Endothelial cell of umbilical vein (primary cell): ENCODE measurements at regions of chr17 and their contacts with region 1.

Region 1: DNA sequence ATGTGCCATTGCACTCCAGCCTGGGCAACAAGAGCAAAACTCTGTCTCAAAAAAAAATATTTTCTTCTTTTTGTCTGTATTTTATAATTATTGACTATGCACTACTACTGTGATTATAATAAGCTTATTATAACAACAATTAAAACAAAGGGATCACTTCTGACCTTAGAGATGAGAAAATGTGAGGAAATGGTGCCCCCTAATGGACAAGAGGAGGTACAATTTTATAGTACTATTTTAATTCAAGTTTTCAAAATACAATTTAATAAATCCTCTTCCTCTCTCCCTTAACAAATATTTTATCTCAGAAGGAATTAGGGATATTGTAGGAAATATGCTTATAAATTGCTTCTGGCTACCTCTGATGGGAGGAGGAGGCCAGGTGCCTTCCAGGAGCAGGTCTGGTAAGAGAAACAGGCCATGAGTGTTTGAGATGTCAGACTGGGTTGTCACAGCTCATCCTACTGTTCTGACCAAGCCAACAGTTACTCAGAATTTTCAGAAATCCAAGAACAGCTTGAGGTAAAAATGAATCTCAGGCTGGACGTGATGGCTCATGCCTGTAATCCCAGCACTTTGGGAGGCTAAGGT is 14.0 kb downstream of the VPS53 start:
- DNase-seq: peak; percentile 40
- H3K4me3 ChIP-seq: no peak overlapping the region
- H3K27ac ChIP-seq: no peak overlapping the region
- H3K4me1 ChIP-seq: peaks cover 13% of the 10 kb centered on the region
- H3K27me3 ChIP-seq: no peaks in the 10 kb centered on the region
- CTCF ChIP-seq: peak; percentile 19 to 23
- POLR2A ChIP-seq: no peak

Region 2: DNA sequence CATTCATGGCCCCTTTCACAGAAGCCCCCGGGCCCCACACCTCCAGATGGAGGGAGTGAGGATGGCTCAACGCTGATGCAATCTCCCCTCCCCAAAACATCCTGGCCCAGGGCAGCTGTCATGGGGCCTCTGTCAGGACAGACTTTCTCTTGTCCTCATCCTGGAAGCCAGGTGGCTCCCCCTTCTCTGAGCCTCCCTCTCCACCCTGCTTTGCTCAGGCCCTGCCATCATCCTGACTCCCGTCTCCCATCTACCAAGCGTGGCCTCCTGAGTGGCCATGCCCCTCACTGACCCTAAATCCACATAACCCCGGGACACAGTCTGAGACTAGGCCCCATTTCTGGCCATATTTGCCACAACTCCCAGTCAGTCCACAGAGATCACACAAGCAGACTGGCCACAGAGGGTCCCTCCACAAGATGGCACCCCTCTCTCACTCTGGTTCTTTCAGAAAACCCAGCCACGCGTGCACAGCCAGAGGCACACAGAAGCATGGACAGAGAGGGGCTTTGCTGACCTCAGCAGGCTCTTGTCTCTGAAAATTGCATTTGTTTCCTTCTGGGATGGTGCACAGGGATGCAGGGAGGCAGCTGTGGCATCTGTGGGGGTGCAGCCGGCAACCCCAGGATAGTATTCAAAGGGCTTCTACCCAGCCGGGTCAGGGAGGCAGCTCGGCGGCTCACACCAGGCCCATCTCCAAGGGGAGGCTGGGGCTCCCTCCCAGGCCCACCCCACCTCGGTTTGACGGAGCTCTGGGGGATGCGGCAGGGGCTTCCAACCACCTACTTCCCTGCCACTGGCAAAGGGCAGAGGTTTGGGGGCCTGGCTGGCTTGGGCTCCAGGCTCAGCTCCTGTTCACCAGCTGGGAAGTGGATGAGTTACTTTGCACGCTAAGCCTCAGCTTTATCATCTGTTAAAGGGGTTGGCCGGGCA is 536.0 kb before region 1 on chr17:
- CTCF ChIA-PET with region 1: interaction called, 20 read pairs
- POLR2A ChIA-PET with region 1: no interaction called
- dilution Hi-C with region 1: no loop called
- intact Hi-C with region 1: no loop called
- DNase-seq: peak; percentile 69
- H3K4me3 ChIP-seq: no peak overlapping the region
- H3K27ac ChIP-seq: no peak overlapping the region
- H3K4me1 ChIP-seq: no peaks in the 10 kb centered on the region
- H3K27me3 ChIP-seq: no peaks in the 10 kb centered on the region
- CTCF ChIP-seq: peak; percentile 65 to 83
- POLR2A ChIP-seq: no peak

Region 3: DNA sequence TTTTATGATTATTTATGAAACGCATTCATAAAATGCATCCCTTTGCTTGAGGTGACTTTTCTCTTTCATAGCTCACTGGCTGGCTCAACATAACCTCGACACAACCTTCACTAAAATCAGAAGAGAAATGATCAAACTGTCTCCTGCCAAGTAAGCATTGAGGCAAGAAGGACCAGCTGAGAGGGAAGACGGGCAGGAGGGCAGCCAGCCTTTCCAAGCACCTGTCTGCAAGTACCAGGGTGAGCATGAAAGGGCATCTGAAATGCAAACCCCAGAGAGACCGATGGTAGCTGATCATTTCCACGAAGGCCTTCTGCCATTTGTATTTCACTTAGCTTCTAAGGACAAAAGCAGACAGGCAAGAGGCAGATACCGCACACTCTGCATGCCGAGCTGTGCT is 295.9 kb before region 1 on chr17:
- CTCF ChIA-PET with region 1: interaction called, 15 read pairs
- POLR2A ChIA-PET with region 1: no interaction called
- dilution Hi-C with region 1: no loop called
- intact Hi-C with region 1: no loop called
- DNase-seq: no peak
- H3K4me3 ChIP-seq: no peak overlapping the region
- H3K27ac ChIP-seq: no peak overlapping the region
- H3K4me1 ChIP-seq: no peaks in the 10 kb centered on the region
- H3K27me3 ChIP-seq: no peaks in the 10 kb centered on the region
- CTCF ChIP-seq: no peak
- POLR2A ChIP-seq: no peak

Region 4: GRCh38 chr17:444879-445454 is 255.6 kb before region 1 on chr17:
- CTCF ChIA-PET with region 1: interaction called, 12 read pairs
- POLR2A ChIA-PET with region 1: no interaction called
- dilution Hi-C with region 1: no loop called
- intact Hi-C with region 1: no loop called
- DNase-seq: no peak
- H3K4me3 ChIP-seq: no peak overlapping the region
- H3K27ac ChIP-seq: no peak overlapping the region
- H3K4me1 ChIP-seq: no peaks in the 10 kb centered on the region
- H3K27me3 ChIP-seq: no peaks in the 10 kb centered on the region
- CTCF ChIP-seq: no peak
- POLR2A ChIP-seq: no peak

Region 5: GRCh38 chr17:559551-560431 is 140.8 kb before region 1 on chr17:
- CTCF ChIA-PET with region 1: interaction called, 12 read pairs
- POLR2A ChIA-PET with region 1: interaction called, 3 read pairs
- dilution Hi-C with region 1: no loop called
- intact Hi-C with region 1: loop called (anchors 2 kb)
- DNase-seq: peak; percentile 73
- H3K4me3 ChIP-seq: no peak overlapping the region
- H3K27ac ChIP-seq: peak overlapping the region; percentile 90
- H3K4me1 ChIP-seq: peaks cover 63% of the 10 kb centered on the region
- H3K27me3 ChIP-seq: no peaks in the 10 kb centered on the region
- CTCF ChIP-seq: no peak
- POLR2A ChIP-seq: no peak

Region 6: GRCh38 chr17:688100-688989 is 12.3 kb before region 1 on chr17:
- CTCF ChIA-PET with region 1: interaction called, 21 read pairs
- POLR2A ChIA-PET with region 1: interaction called, 6 read pairs
- dilution Hi-C with region 1: no loop called
- intact Hi-C with region 1: no loop called
- DNase-seq: peak; percentile 34
- H3K4me3 ChIP-seq: no peak overlapping the region
- H3K27ac ChIP-seq: no peak overlapping the region
- H3K4me1 ChIP-seq: peaks cover 4% of the 10 kb centered on the region
- H3K27me3 ChIP-seq: no peaks in the 10 kb centered on the region
- CTCF ChIP-seq: peak in 1 of 2 donors; percentile 22
- POLR2A ChIP-seq: no peak

Region 7: DNA sequence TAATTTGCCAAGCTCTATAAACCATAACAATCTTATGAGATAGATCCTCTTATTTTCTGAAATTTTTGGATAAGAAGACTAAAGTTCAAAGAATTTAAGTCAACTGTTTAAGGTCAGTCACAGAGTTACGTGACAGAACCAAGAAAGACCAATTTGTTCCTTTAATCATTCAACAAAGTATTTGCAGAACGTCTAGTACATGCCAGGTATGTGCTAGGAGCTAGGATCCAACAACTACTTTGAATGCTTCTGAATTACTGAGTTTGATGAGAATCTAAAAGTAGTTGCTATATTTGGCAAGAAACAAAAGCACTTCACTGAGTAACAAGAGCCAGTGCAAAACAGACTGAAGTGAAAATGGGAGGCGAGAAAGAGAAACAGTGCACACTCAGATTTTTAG is 66.5 kb after region 1 on chr17:
- CTCF ChIA-PET with region 1: no interaction called
- POLR2A ChIA-PET with region 1: no interaction called
- dilution Hi-C with region 1: no loop called
- intact Hi-C with region 1: no loop called
- DNase-seq: no peak
- H3K4me3 ChIP-seq: no peak overlapping the region
- H3K27ac ChIP-seq: no peak overlapping the region
- H3K4me1 ChIP-seq: no peaks in the 10 kb centered on the region
- H3K27me3 ChIP-seq: no peaks in the 10 kb centered on the region
- CTCF ChIP-seq: no peak
- POLR2A ChIP-seq: no peak